ENCODE measurements at regions of chr11 and their contacts with region 1.

Region 1: DNA sequence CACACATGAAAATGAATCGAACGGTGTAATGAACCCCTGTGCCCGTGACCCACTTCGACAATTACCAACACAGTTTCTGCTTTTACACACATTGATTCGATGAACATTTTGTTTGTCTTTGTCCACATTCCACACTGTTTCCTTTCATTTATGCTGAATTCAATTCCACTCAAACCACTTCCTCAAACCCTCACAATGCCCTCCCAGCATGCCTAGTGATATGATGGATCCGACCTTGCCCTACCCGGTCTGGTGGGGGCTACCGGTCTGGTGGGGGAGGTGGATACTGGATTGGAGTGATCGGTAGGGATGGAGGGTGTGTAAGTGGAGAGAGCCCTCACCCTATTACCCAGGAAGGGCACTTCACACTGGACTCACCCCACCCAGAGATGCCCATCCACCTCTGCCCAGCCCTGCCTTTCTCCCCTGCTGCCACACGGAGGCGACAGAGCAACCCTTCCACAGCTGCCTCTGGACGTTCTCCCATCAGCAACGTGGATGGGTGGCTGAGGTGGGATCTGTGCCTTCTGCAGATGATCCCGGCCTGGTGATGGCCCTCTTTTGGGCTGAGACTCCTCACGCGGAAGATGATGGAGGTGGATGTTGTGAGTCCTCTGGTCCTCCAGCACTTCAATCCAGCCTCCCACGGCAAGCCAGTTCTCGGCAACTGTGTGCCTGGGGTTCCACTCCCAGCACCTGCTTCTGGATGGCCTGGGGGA is 33.0 kb upstream of the P2RY2 start:
- DNase-seq: peak; percentile 79
- H3K4me3 Mint-ChIP-seq: peak overlapping the region; percentile 48
- H3K27ac Mint-ChIP-seq: no peak overlapping the region
- H3K4me1 Mint-ChIP-seq: peaks cover 17% of the 10 kb centered on the region
- H3K27me3 Mint-ChIP-seq: peaks cover 8% of the 10 kb centered on the region
- CTCF ChIP-seq: peak; percentile 84

Region 2: DNA sequence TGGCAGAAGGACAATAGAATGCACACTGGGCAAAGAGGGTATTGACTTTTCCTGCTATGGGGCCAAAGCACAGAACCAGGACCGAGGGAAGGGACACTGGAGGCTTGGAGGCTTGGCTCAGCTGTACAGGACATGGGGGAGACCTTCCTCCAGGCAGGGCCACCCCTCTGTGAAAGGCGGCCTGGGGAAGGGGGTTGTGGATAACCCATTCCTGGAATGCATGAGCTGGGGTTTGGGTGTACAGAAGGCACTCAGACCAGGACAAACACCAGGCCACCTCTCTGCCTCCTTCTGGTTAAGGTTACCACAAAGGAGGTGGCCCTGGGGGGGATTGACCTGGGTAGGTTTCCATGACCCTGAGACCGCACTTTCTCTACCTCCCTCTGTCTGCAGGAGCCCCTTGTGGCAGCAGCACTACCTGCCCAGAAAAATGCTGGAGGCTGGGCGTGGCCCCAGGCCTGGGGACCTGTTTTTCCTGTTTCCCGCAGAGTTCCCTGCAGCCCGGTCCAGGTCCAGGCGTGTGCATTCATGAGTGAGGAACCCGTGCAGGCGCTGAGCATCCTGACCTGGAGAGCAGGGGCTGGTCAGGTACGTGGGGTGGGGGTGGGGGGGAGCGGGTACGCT is 42.6 kb after region 1 on chr11:
- CTCF ChIA-PET with region 1: no interaction called
- intact Hi-C with region 1: loop called (anchors 5 kb)
- DNase-seq: peak; percentile 91
- H3K4me3 Mint-ChIP-seq: no peak overlapping the region
- H3K27ac Mint-ChIP-seq: no peak overlapping the region
- H3K4me1 Mint-ChIP-seq: peaks cover 8% of the 10 kb centered on the region
- H3K27me3 Mint-ChIP-seq: no peaks in the 10 kb centered on the region
- CTCF ChIP-seq: peak; percentile 57

Region 3: DNA sequence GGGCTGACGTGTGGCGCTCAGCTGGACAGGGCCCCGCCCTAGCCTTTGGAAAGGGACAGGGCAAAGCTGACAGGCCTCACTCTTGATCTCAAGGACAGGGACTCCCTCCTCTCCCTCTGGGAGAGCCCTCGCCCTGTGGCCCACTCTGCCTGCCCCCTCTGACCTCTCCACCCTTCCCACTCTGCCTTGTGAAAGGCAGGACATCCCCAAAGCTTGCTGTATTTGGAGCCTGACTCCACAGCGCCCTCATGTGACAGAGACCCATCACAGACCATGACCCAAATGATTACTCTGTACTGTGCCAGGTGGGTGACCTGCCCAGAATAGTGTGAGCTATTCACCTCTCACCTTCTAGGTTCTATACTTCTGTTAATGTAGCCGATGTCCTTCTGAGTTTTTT is 51.7 kb after region 1 on chr11:
- CTCF ChIA-PET with region 1: interaction called, 18 read pairs
- intact Hi-C with region 1: loop called (anchors 1 kb)
- DNase-seq: peak; percentile 56
- H3K4me3 Mint-ChIP-seq: no peak overlapping the region
- H3K27ac Mint-ChIP-seq: no peak overlapping the region
- H3K4me1 Mint-ChIP-seq: peaks cover 19% of the 10 kb centered on the region
- H3K27me3 Mint-ChIP-seq: no peaks in the 10 kb centered on the region
- CTCF ChIP-seq: peak; percentile 38

Region 4: DNA sequence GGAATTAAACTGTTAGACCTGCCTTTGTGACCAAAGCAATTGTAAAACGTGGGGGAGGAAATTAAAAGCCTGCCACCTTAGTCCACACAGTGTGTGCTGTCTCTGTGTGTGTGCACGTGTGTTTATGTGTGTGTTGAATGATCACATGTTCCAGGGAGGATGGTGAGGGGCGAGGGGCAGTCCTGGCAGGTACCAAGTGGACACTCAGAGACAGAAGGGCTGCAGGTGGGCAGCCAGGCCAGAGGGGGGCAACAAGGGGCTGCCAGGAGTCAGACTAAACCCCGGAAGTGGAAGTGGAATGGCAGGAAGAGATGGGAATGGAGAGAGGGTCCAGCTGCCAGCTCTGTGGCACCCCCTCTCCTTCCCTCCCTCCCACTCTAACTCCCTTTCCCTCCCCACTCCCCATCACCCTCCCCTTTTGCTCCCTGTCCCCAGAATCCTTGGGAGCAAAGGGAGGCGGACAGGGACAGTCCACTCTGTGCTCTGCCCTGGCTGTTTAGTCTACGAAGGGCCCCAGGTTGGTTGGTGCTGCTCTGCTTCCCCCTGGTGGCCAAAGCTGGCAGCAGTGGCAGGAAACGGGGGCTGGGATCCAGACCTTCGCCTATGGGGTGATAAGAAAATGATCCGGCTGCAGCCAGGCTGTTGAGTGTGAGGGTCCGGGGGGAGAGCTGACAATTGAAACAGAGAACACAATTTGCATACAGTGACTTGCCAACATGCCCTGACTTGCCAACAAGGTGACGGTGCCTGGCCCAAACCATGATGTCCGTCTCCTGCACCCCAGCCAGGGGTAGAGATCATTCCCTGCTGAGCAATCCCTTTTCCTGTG is 57.4 kb after region 1 on chr11:
- CTCF ChIA-PET with region 1: interaction called, 18 read pairs
- intact Hi-C with region 1: loop called (anchors 1 kb)
- DNase-seq: peak; percentile 86
- H3K4me3 Mint-ChIP-seq: no peak overlapping the region
- H3K27ac Mint-ChIP-seq: peak overlapping the region; percentile 14
- H3K4me1 Mint-ChIP-seq: peaks cover 19% of the 10 kb centered on the region
- H3K27me3 Mint-ChIP-seq: peaks cover 30% of the 10 kb centered on the region
- CTCF ChIP-seq: peak; percentile 85

Measured in Calu3 (cell line).